Lower leg skin (tissue), 4 donors: ENCODE measurements at regions of chr1 and their contacts with region 1.

Region 1: DNA sequence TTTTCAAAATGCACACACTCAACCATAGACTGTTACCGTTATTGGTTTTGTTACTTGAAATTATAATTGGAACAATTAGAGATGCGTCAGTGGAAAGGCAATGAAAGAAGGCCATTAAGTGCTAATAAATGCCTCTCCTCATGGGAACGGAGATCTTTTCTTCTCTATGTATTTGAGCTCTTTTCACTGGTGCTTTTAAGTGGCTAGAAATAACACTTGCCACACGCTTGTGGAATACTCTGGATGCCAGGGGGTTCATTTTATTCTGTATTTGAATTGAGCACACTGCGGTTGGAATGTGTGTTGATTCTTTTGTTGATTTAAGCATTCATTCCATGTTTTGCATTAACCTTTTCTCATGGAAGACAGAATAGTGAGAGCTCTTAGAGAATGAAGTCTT is 68.4 kb downstream of the DNM3 start:
- DNase-seq: no peak
- H3K4me3 ChIP-seq: no peak overlapping the region
- CTCF ChIP-seq: no peak
- POLR2A ChIP-seq: no peak

Region 2: DNA sequence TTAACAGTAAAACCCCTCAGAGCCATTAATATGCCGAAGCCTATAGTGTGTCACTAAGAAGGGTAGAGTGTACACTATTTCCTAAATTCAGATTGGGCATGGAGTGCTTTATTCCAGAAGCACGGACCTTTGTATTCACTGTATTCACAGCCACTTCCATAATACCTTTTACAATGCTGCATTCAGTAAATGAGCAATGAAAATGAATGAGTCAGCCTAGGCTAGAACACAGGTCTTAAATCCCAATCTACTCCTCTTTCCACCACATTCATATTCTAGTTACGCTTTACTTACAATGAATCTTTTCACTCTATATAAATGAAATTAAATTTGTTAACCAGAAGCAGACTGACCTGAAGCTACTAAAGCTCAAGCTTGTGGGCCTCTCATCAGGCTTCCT is 1390.7 kb before region 1 on chr1:
- intact Hi-C with region 1: loop called (anchors 5 kb)
- DNase-seq: no peak
- H3K4me3 ChIP-seq: no peak overlapping the region
- CTCF ChIP-seq: no peak
- POLR2A ChIP-seq: no peak